ENCODE measurements at regions of chr20 and their contacts with region 1.

Region 1: DNA sequence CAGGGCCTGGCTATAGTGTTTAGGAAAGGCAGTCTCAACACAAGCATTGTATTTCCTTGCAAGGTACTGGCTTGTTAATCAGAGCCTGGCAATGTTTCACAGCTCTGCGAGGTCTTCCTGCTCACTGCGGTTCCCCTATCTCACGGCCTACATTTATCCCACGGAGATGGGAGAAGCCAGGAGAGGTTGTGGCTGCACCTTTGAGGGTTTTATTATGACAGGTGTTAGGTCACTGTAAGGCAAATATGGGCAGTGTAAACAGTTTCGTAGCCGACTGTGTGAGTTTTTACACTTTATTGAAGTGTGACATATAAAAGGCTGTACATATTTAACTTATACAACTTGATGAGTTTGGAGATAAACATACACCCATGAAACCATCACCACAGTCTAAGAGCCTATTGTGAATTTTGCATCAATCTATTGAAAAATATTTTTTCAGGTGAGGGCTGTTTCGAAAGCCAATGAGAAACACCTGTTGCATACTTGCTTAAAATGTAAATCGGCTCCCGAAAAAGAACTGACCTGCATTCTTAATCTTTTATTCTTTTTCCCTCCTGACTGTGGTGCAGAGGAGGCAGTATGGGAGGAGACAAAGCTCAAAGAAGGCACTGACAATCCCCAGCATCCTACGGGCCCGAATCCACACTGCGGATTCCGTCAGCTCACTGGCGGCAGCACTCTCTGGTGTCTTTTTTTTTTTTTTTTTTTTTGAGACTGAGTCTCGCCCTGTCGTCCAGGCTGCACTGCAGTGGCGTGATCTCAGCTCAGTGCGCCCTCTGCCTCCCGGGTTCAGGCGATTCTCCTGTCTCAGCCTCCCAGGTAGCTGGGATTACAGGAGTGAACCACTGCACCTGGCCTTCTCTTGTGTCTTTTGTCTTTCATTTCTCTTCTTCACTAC is 7.5 kb upstream of the RBM38 start:
- DNase-seq: no peak
- H3K4me3 Mint-ChIP-seq: no peak overlapping the region
- H3K27ac Mint-ChIP-seq: no peak overlapping the region
- H3K4me1 Mint-ChIP-seq: peaks cover 35% of the 10 kb centered on the region
- H3K27me3 Mint-ChIP-seq: no peaks in the 10 kb centered on the region

Region 2: GRCh38 chr20:57495985-57496384 is 112.3 kb after region 1 on chr20:
- intact Hi-C with region 1: loop called (anchors 1 kb)
- DNase-seq: no peak
- H3K4me3 Mint-ChIP-seq: no peak overlapping the region
- H3K27ac Mint-ChIP-seq: no peak overlapping the region
- H3K4me1 Mint-ChIP-seq: peaks cover 13% of the 10 kb centered on the region
- H3K27me3 Mint-ChIP-seq: peaks cover 40% of the 10 kb centered on the region

Region 3: GRCh38 chr20:57680131-57680716 is 296.5 kb after region 1 on chr20:
- intact Hi-C with region 1: no loop called
- DNase-seq: no peak
- H3K4me3 Mint-ChIP-seq: no peak overlapping the region
- H3K27ac Mint-ChIP-seq: no peak overlapping the region
- H3K4me1 Mint-ChIP-seq: no peaks in the 10 kb centered on the region
- H3K27me3 Mint-ChIP-seq: peaks cover 8% of the 10 kb centered on the region

Measured in activated T-helper 2 cell treated with anti-CD3 and anti-CD28 coated beads, Interferon-gamma antibody, Interleukin-2, Interleukin-4, amounts not matched to agents 10 μg/mL and 5 μg/mL and 100 μg/mL, durations not matched to agents 14 hours and 24 hours and 36 hours (primary cell).